WTC11 (cell line): ENCODE measurements at regions of chr1 and their contacts with region 1.

Region 1: DNA sequence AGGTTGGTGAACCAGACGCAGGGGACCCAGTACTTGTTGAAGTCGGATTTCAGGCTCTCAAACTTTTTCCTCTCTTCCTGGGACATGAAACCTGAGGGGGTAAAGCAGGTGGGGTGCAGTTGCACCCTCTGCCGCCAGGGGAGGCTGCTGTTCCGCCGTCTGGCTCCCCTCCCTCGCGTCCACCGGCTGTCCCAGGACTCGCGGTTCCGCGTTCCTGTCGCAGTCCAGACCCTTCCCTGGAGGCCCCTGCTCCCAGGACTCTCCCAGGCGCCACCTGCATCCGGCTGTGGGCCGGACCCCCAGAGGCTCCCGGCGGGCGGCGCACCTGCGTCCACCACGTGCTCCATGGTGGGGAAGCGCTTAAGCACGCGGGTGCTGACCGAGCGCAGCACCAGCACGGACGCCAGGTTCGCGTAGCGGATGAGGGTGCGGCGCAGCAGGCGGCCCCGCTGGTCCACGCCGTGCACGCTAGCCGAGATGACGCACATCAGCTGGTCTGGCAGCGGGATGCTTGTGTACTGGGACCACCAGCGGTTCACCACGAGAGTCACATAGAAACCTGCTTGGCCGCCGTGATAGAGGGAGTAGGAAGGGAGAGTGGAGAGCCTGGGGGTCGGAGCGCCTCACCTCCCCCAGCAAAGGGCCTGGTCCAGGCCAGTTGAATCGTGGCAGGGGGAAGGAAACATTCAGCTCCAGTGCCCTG is 1.7 kb downstream of the BEST4 start:
- DNase-seq: peak; percentile 88
- ATAC-seq: peak; percentile 50
- H3K4me3 Mint-ChIP-seq: peak overlapping the region; percentile 70
- H3K27ac Mint-ChIP-seq: no peak overlapping the region; the same call in 1 of the 2 replicates
- H3K4me1 Mint-ChIP-seq: peaks cover 35% of the 10 kb centered on the region
- H3K27me3 Mint-ChIP-seq: peaks cover 12% of the 10 kb centered on the region
- CTCF ChIP-seq: peak; percentile 100

Region 2: DNA sequence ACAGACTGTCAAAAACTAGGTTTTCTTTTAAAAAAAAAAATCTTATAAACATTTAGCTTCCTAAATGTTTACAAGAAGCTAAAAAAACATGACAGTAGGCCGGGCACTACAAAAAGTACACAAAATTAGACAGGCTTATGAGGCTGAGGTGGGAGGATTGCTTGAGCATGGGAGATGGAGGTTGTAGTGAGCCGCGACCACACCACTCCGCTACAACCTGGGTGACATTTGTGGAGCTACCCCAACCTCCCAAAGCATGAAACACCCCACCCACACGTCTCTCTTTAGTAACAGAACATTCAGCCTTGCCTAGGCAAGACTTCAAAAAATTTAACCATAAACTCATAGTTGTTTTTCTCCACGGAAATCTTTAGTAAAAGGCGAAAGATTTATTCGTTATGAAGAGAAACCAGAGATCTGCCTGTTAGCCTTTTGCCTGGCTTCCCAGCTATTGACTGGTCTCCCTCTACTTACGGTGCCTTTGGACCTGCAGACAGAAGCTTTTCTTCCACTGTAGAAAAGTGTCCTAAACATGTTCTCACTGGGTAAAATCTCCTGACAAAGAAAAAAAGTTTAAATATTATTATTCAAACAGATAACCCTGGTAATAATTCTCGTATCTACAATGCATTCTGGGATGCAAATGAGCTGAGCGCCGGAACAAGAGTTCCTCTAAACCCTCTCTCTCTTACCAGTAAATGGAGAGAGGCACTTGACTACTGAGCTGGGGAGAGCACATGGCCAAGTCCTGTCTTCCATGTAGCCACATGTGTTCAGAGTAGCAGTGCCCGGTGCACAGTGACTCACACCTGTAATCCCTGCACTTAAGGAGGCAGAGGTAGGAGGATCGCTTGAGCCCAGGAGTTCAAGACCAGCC is 64.6 kb before region 1 on chr1:
- CTCF ChIA-PET with region 1: interaction called, 4 read pairs
- POLR2A ChIA-PET with region 1: interaction called, 10 read pairs
- DNase-seq: no peak
- ATAC-seq: peak; percentile 90
- H3K4me3 Mint-ChIP-seq: no peak overlapping the region
- H3K27ac Mint-ChIP-seq: peak overlapping the region; percentile 94
- H3K4me1 Mint-ChIP-seq: peaks cover 6% of the 10 kb centered on the region; the same call in 1 of the 2 replicates
- H3K27me3 Mint-ChIP-seq: peaks cover 3% of the 10 kb centered on the region
- CTCF ChIP-seq: no peak

Region 3: GRCh38 chr1:44775078-44775929 is 11.0 kb before region 1 on chr1 and contains the start of gene RPS8:
- CTCF ChIA-PET with region 1: interaction called, 9 read pairs
- POLR2A ChIA-PET with region 1: interaction called, 19 read pairs
- DNase-seq: peak; percentile 93
- ATAC-seq: peak; percentile 88
- H3K4me3 Mint-ChIP-seq: peak within 1 kb of the TSS; percentile 87
- H3K27ac Mint-ChIP-seq: peak within 1 kb of the TSS; percentile 97
- H3K4me1 Mint-ChIP-seq: peaks cover 22% of the 10 kb centered on the region
- H3K27me3 Mint-ChIP-seq: no peaks in the 10 kb centered on the region
- CTCF ChIP-seq: no peak
- total RNA-seq, gene RPS8: 2,343 to 2,726 TPM (median 2,722 TPM) in 3 replicates

Region 4: DNA sequence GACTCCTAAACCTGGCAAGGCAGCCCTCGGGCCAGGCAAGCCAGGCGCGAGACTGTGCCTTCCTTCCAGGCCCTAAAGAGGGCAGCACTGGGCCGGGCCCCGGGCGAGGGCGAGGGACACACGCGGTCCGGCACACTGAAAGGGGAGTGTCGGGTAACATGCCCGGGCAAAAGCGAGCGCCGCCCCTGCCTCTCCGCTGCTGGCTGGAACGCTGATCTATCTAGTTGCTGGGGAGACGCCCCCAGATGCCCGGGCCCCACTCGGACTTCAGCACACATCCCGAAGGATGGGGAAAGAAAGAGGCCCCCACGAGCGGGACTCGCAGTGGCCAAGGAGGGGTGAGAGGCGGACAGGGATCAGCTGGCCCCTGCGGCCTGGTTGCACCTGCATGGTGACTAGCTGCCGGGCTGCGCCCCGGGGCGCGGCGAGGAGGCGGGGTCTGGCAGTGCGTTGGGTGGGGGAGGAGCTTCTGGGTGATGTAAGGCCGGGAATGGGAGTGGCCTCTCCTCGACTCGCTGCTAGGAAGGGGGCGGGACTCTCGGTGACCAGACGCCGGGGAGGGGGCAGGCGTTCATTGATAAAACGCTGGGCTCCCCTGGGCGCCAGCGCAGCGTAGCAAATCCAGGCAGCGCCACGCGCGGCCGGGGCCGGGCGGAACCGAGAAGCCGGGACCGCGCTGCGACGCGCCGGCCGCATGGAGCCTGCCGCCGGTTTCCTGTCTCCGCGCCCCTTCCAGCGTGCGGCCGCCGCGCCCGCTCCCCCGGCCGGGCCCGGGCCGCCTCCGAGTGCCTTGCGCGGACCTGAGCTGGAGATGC is 13.7 kb after region 1 on chr1 and contains the start of gene PLK3:
- CTCF ChIA-PET with region 1: interaction called, 21 read pairs
- POLR2A ChIA-PET with region 1: interaction called, 10 read pairs
- DNase-seq: peak; percentile 98
- ATAC-seq: peak; percentile 90
- H3K4me3 Mint-ChIP-seq: peak within 1 kb of the TSS; percentile 87
- H3K27ac Mint-ChIP-seq: peak within 1 kb of the TSS; percentile 99
- H3K4me1 Mint-ChIP-seq: peaks cover 18% of the 10 kb centered on the region
- H3K27me3 Mint-ChIP-seq: peaks cover 3% of the 10 kb centered on the region; the same call in 1 of the 2 replicates
- CTCF ChIP-seq: peak; percentile 66
- total RNA-seq, gene PLK3: 10.1 to 16.4 TPM (median 12.0 TPM) in 3 replicates